ENCODE measurements at regions of chr3 and their contacts with region 1.

Region 1: DNA sequence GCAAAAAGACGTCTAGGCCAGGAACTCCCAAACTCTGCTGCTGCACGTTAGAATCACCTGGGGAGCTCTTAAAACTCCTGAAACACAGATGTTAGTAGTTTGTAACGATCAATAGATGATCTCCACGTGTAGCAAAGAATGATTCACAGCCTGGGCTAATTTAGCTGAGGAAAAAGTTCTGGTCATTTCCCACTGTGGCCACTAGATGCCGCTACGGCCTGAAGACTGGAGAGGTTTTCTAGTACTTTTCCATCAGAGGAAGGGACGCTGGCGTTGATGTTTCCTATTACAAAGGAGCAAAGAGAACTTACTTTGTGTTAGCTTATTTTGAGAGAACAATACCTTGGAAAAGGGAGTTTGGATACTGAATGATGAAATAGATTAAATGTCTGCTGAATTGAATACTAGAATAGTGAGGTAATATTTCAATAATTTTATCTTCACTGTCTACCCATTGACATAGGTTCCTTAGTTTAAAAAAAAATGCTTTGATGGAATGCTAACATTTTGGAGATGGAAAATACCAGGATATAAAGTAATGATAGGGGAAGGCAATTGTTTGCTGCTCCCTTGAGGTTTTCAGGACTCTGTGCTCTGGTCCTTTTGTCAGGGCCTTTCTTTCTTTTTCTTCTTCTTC is 159.1 kb downstream of the P3H2 start:
- DNase-seq: peak; percentile 83
- H3K4me3 Mint-ChIP-seq: no peak overlapping the region
- H3K27ac Mint-ChIP-seq: no peak overlapping the region
- H3K4me1 Mint-ChIP-seq: no peaks in the 10 kb centered on the region
- H3K27me3 Mint-ChIP-seq: peaks cover 9% of the 10 kb centered on the region

Region 2: DNA sequence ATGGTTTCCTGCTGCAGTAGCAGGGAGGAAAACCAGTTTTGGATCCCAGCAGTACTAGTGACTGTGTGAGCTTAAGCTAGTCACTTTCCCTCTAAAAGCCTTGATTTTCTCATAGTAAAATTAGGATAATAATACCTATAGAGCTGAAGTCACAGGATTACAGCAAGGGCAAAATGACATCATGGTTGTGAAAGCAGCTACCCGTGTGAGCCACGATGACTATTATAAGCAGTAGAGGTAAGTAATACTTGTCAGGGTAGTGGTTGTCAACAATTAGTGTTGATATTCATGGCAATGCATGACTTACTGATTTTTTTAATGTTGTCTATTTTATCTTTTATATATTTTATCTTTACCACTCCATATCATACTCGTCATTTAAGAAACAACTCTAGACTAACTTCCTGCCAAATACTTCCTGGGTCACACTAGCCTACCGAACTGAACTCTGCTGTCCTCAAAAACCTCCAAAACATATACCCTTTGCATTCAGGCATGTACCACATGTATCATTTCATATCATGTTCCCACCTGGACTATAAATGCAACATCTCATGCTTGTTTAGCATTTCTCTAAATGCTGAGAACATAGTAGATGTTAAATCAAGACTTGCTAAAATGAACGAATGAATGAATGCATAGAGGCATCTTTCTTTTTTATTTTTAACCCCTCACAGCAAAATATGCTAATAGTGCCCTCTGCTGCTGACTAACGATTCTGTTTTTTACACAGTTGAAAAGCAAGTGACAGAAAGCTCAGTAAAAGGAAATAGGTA is 13.5 kb before region 1 on chr3:
- CTCF ChIA-PET with region 1: interaction called, 34 read pairs
- POLR2A ChIA-PET with region 1: no interaction called
- intact Hi-C with region 1: no loop called
- DNase-seq: no peak
- H3K4me3 Mint-ChIP-seq: no peak overlapping the region
- H3K27ac Mint-ChIP-seq: no peak overlapping the region
- H3K4me1 Mint-ChIP-seq: peaks cover 3% of the 10 kb centered on the region
- H3K27me3 Mint-ChIP-seq: peaks cover 11% of the 10 kb centered on the region

Region 3: GRCh38 chr3:190205739-190206138 is 244.1 kb after region 1 on chr3:
- CTCF ChIA-PET with region 1: interaction called, 27 read pairs
- POLR2A ChIA-PET with region 1: no interaction called
- intact Hi-C with region 1: loop called (anchors 1 kb)
- DNase-seq: no peak
- H3K4me3 Mint-ChIP-seq: no peak overlapping the region
- H3K27ac Mint-ChIP-seq: no peak overlapping the region
- H3K4me1 Mint-ChIP-seq: peaks cover 13% of the 10 kb centered on the region
- H3K27me3 Mint-ChIP-seq: peaks cover 23% of the 10 kb centered on the region

Region 4: GRCh38 chr3:190513409-190514162 is 551.9 kb after region 1 on chr3 and contains the start of gene IL1RAP:
- CTCF ChIA-PET with region 1: interaction called, 4 read pairs
- POLR2A ChIA-PET with region 1: no interaction called
- intact Hi-C with region 1: loop called (anchors 5 kb)
- DNase-seq: peak; percentile 90
- H3K4me3 Mint-ChIP-seq: peak within 1 kb of the TSS; percentile 86
- H3K27ac Mint-ChIP-seq: peak within 1 kb of the TSS; percentile 64
- H3K4me1 Mint-ChIP-seq: peaks cover 33% of the 10 kb centered on the region
- H3K27me3 Mint-ChIP-seq: no peaks in the 10 kb centered on the region
- total RNA-seq, gene IL1RAP: 14.8 to 15.8 TPM

Measured in activated CD4-positive, alpha-beta memory T cell treated with anti-CD3 and anti-CD28 coated beads for 36 hours (primary cell).